ENCODE measurements at regions of chr2 and their contacts with region 1.

Region 1: DNA sequence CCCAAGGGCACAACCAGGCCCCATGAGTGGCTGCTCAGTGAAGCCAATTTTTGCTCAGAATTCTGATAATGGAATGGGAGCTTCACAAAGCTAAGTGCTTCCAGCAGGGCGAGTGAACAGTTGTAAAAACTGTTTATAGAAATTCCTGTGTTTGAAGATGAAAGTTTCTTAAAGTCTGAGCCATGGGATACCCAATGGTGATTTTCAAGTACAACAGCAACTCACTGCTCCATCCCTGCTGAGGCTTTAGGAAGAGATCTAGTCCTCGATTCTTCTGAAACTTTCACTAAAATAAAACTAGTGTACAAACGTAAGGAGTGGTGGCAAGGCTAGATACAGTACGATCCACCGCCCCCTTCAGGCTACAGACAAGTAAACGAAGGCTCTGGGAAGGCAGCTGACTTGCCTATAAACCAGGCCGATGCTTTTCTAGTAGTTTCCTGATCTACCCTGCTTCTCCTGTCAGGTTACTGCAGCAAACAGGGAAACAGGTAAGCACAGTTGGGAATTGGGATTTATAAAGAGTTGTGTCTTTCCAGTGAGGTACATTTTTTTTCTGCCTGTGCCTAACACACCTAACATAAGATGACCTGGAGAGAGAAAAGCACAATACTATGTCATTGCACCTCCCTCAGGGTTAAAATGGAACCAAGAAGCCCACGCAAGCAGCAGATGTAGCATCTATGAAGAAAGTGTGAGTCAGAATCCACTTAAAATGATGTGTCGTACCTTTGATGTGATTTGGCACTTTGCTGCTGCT is 108.7 kb downstream of the UXS1 start:
- DNase-seq: peak in 13 of 14 experiments; percentile 40 to 86 (median 60)
- ATAC-seq: peak; percentile 90
- H3K4me3 ChIP-seq: peak overlapping the region; percentile 9
- H3K4me3 Mint-ChIP-seq: peak overlapping the region; percentile 50
- H3K27ac ChIP-seq: peak overlapping the region; percentile 56 to 59
- H3K27ac Mint-ChIP-seq: peak overlapping the region; percentile 95
- H3K4me1 ChIP-seq: peaks cover 35% of the 10 kb centered on the region
- H3K4me1 Mint-ChIP-seq: peaks cover 73% of the 10 kb centered on the region
- H3K27me3 ChIP-seq: no peaks in the 10 kb centered on the region
- H3K27me3 Mint-ChIP-seq: no peaks in the 10 kb centered on the region
- CTCF ChIP-seq: peak; percentile 61

Region 2: DNA sequence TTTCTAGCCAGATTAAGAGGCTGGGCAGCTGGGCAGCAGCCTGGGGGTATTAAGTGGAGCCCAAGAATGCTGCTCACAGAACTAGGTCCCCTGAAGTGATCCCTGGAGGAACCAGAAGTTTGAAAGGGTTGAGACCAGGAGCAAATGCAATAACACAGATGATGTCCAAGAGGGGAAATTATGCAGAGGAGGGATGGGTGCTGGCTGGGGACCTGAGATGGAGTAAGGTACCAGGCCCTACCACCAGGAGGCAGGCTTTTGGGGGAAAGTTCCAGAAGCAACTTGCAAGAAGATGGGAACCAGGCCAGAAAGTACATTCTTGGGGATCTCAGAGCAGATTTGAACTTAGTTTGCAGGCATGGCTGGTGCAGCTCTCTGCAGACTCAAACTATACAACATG is 165.5 kb before region 1 on chr2:
- CTCF ChIA-PET with region 1: no interaction called
- POLR2A ChIA-PET with region 1: interaction called, 3 read pairs
- intact Hi-C with region 1: loop called (anchors 2 to 5 kb)
- DNase-seq: peak; percentile 39 to 77 (median 52)
- ATAC-seq: peak; percentile 56
- H3K4me3 ChIP-seq: no peak overlapping the region
- H3K4me3 Mint-ChIP-seq: no peak overlapping the region
- H3K27ac ChIP-seq: no peak overlapping the region
- H3K27ac Mint-ChIP-seq: no peak overlapping the region
- H3K4me1 ChIP-seq: peaks cover 30% of the 10 kb centered on the region
- H3K4me1 Mint-ChIP-seq: peaks cover 58% of the 10 kb centered on the region
- H3K27me3 ChIP-seq: no peaks in the 10 kb centered on the region
- H3K27me3 Mint-ChIP-seq: no peaks in the 10 kb centered on the region
- CTCF ChIP-seq: peak; percentile 58

Region 3: GRCh38 chr2:105929516-105929915 is 155.8 kb before region 1 on chr2:
- CTCF ChIA-PET with region 1: interaction called, 3 read pairs
- POLR2A ChIA-PET with region 1: interaction called, 5 read pairs
- intact Hi-C with region 1: loop called (anchors 2 to 5 kb)
- DNase-seq: peak; percentile 8 to 89 (median 52)
- ATAC-seq: peak; percentile 82
- H3K4me3 ChIP-seq: no peak overlapping the region
- H3K4me3 Mint-ChIP-seq: peak overlapping the region; percentile 47
- H3K27ac ChIP-seq: peak overlapping the region; percentile 19 to 42
- H3K27ac Mint-ChIP-seq: peak overlapping the region; percentile 81
- H3K4me1 ChIP-seq: peaks cover 95% of the 10 kb centered on the region
- H3K4me1 Mint-ChIP-seq: peaks cover 62% of the 10 kb centered on the region
- H3K27me3 ChIP-seq: no peaks in the 10 kb centered on the region
- H3K27me3 Mint-ChIP-seq: no peaks in the 10 kb centered on the region
- CTCF ChIP-seq: no peak

Region 4: GRCh38 chr2:106004851-106005250 is 80.5 kb before region 1 on chr2:
- CTCF ChIA-PET with region 1: no interaction called
- POLR2A ChIA-PET with region 1: no interaction called
- intact Hi-C with region 1: no loop called
- DNase-seq: no peak
- ATAC-seq: no peak
- H3K4me3 ChIP-seq: no peak overlapping the region
- H3K4me3 Mint-ChIP-seq: no peak overlapping the region
- H3K27ac ChIP-seq: no peak overlapping the region
- H3K27ac Mint-ChIP-seq: no peak overlapping the region
- H3K4me1 ChIP-seq: no peaks in the 10 kb centered on the region
- H3K4me1 Mint-ChIP-seq: no peaks in the 10 kb centered on the region
- H3K27me3 ChIP-seq: no peaks in the 10 kb centered on the region
- H3K27me3 Mint-ChIP-seq: no peaks in the 10 kb centered on the region
- CTCF ChIP-seq: no peak

Region 5: DNA sequence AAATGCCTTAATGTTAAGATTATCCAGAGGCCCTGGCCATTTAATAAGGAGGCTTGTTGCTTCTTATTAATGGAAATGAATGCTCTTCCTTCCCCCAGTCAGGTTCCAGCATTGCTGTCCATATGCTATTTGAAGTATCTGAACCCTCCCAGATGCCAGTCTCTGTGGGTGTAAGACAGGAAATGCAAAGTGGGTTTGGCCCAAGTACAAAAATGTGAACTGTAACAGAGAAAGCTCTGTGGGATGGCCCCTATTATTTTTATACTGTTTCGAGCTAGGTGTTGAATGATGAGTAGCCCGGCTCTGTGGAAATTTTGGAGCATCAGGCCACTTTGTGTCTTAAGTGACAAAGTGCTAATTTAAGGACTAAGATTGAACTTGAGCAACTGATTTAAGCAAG is 32.2 kb before region 1 on chr2:
- CTCF ChIA-PET with region 1: interaction called, 3 read pairs
- POLR2A ChIA-PET with region 1: no interaction called
- intact Hi-C with region 1: loop called in 1 of 2 experiments (anchors 5 kb)
- DNase-seq: peak in 4 of 14 experiments; percentile 34 to 61 (median 42)
- ATAC-seq: peak; percentile 45
- H3K4me3 ChIP-seq: no peak overlapping the region
- H3K4me3 Mint-ChIP-seq: peak overlapping the region; percentile 64
- H3K27ac ChIP-seq: no peak overlapping the region
- H3K27ac Mint-ChIP-seq: peak overlapping the region; percentile 24
- H3K4me1 ChIP-seq: peaks cover 57% of the 10 kb centered on the region
- H3K4me1 Mint-ChIP-seq: peaks cover 73% of the 10 kb centered on the region
- H3K27me3 ChIP-seq: no peaks in the 10 kb centered on the region
- H3K27me3 Mint-ChIP-seq: no peaks in the 10 kb centered on the region
- CTCF ChIP-seq: no peak

Measured in CD4-positive, alpha-beta T cell (primary cell).